Natural killer cell (primary cell): ENCODE measurements at regions of chr17 and their contacts with region 1.

Region 1: GRCh38 chr17:59914274-59914854 is 21.4 kb downstream of the RPS6KB1 start:
- DNase-seq: peak in 1 of 2 donors; percentile 73
- ATAC-seq: peak; percentile 58 to 69 (median 61)
- H3K4me3 ChIP-seq: no peak overlapping the region
- H3K4me3 Mint-ChIP-seq: no peak overlapping the region
- H3K27ac ChIP-seq: no peak overlapping the region
- H3K27ac Mint-ChIP-seq: no peak overlapping the region
- H3K4me1 ChIP-seq: no peaks in the 10 kb centered on the region
- H3K4me1 Mint-ChIP-seq: peaks cover 0 to 4% of the 10 kb centered on the region in 2 donors
- H3K27me3 ChIP-seq: no peaks in the 10 kb centered on the region
- H3K27me3 Mint-ChIP-seq: no peaks in the 10 kb centered on the region
- CTCF ChIP-seq: peak; percentile 77

Region 2: GRCh38 chr17:60036796-60037612 is 122.6 kb after region 1 on chr17:
- intact Hi-C with region 1: loop called (anchors 5 kb)
- DNase-seq: peak; percentile 56 to 85
- ATAC-seq: peak; percentile 86 to 95 (median 91)
- H3K4me3 ChIP-seq: no peak overlapping the region
- H3K4me3 Mint-ChIP-seq: no peak overlapping the region
- H3K27ac ChIP-seq: no peak overlapping the region
- H3K27ac Mint-ChIP-seq: no peak overlapping the region
- H3K4me1 ChIP-seq: peaks cover 4% of the 10 kb centered on the region
- H3K4me1 Mint-ChIP-seq: peaks cover 5 to 6% of the 10 kb centered on the region in 2 donors
- H3K27me3 ChIP-seq: no peaks in the 10 kb centered on the region
- H3K27me3 Mint-ChIP-seq: peaks cover 6 to 14% of the 10 kb centered on the region in 2 donors
- CTCF ChIP-seq: peak; percentile 86

Region 3: DNA sequence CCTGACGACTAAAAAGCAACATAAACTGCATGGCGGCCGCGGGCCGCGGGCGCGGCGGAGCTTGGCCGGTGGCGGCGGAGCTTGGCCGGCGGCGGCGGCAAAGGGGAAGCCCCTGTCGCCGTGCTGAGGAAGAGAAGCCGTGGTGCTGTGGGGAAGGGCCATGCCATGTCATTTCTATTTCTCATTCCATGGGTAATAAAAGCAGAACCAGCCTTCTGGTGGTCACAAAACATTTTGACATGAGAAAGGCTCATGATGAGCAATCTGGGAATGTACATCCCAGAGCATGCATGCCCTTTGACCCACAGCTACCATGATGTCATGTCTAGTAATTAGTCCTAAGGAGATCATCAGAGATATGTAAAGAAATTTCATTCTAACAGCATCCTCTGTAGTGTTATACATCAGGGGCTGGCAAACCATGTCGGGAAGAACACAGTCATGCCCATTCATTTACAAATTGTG is 188.3 kb after region 1 on chr17:
- intact Hi-C with region 1: loop called (anchors 10 kb)
- DNase-seq: peak in 1 of 2 donors; percentile 43
- ATAC-seq: peak; percentile 78 to 92 (median 86)
- H3K4me3 ChIP-seq: no peak overlapping the region
- H3K4me3 Mint-ChIP-seq: peak overlapping the region; percentile 40
- H3K27ac ChIP-seq: no peak overlapping the region
- H3K27ac Mint-ChIP-seq: no peak overlapping the region
- H3K4me1 ChIP-seq: no peaks in the 10 kb centered on the region
- H3K4me1 Mint-ChIP-seq: peaks cover 6 to 18% of the 10 kb centered on the region in 2 donors
- H3K27me3 ChIP-seq: peaks cover 4% of the 10 kb centered on the region
- H3K27me3 Mint-ChIP-seq: peaks cover 14 to 26% of the 10 kb centered on the region in 2 donors
- CTCF ChIP-seq: no peak